Gastrocnemius medialis (tissue), 4 donors: ENCODE measurements at regions of chr17 and their contacts with region 1.

Region 1: DNA sequence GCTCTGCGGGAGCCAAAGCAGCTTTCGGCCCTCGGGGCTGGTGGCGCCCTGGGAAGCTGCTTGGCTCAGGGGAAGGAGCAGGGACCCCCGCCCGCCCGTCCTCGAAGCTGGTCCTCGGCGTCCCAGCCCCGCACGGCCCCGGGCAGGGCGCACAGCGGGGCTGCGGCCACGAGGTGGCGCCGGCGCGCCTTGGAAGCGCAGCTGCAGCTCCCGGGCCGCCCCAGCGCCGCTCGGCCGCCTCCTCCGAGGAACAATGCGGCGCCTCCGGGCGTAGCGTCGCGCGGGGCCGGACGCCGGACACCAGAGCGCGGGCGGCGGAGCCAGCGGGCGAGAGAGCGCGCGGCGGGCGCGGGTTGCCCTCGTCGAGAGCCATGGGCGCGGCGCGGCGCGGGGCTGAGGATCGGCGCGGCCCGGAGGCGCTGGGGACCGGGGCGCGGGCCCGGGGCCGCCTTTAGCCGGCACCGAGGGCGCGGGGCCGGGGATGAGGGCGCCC is at the start of gene MGAT5B:
- DNase-seq: peak; percentile 24 to 41
- ATAC-seq: peak; percentile 91
- H3K4me3 ChIP-seq: peak within 1 kb of the TSS in 1 of 4 donors; percentile 18
- H3K27ac ChIP-seq: no peak within 1 kb of the TSS
- H3K4me1 ChIP-seq: peaks cover 0 to 3% of the 10 kb centered on the region in 2 donors
- H3K27me3 ChIP-seq: peaks cover 27 to 34% (median 29%) of the 10 kb centered on the region in 3 donors
- CTCF ChIP-seq: peak; percentile 61 to 96 (median 88)
- POLR2A ChIP-seq: no peak
- total RNA-seq, gene MGAT5B: not detected

Region 2: GRCh38 chr17:76843703-76844484 is 24.3 kb before region 1 on chr17:
- in situ Hi-C with region 1: no loop called
- intact Hi-C with region 1: no loop called
- DNase-seq: no peak
- ATAC-seq: no peak
- H3K4me3 ChIP-seq: no peak overlapping the region
- H3K27ac ChIP-seq: no peak overlapping the region
- H3K4me1 ChIP-seq: no peaks in the 10 kb centered on the region
- H3K27me3 ChIP-seq: peaks cover 28 to 61% (median 48%) of the 10 kb centered on the region in 3 donors
- CTCF ChIP-seq: no peak
- POLR2A ChIP-seq: no peak

Region 3: DNA sequence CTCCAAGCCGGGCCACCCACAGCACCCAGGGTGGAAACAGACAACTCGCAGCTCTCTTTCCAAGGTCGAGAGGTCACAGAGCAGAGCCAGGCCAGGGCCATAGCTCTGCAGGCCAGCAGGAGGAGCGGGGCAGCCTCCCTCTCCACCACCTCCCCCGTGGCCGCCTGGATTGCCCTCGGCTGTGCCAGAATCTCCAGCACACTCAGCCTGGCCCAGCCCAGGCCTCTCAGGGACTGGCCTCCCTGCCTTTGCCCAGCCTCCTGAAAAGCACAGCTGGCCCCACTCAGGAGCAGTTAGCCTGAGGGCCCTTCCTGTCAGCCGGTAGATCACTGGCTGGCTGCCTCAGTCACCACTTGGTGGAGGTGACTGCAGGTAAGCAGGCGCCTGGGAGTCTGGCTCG is 186.7 kb after region 1 on chr17:
- in situ Hi-C with region 1: loop called (anchors 5 to 10 kb)
- intact Hi-C with region 1: loop called (anchors 1 kb)
- DNase-seq: no peak
- ATAC-seq: no peak
- H3K4me3 ChIP-seq: no peak overlapping the region
- H3K27ac ChIP-seq: no peak overlapping the region
- H3K4me1 ChIP-seq: no peaks in the 10 kb centered on the region
- H3K27me3 ChIP-seq: peaks cover 22 to 34% (median 26%) of the 10 kb centered on the region in 3 donors
- CTCF ChIP-seq: no peak
- POLR2A ChIP-seq: no peak

Region 4: DNA sequence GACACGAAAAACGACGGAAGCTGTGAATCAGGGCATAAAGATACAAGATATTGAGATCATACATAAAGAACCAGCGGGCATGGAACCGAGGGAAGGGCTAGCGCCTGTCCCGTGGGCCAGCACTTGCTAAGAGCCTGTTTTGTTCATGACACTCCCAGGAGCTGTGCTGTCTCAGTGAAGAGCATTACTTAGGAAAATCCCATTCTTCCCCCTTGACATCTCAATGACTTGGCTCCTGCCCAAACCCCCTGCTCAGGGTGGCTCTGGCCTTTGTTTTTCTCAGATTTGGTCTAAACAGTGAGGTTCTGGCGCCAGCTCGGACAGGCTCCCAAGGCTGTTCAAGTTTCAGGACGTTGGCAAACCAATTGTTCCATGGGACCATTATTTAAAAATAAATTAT is 193.4 kb after region 1 on chr17:
- in situ Hi-C with region 1: loop called in 3 of 4 experiments (anchors 5 to 10 kb)
- intact Hi-C with region 1: loop called (anchors 1 kb)
- DNase-seq: no peak
- ATAC-seq: no peak
- H3K4me3 ChIP-seq: no peak overlapping the region
- H3K27ac ChIP-seq: no peak overlapping the region
- H3K4me1 ChIP-seq: no peaks in the 10 kb centered on the region
- H3K27me3 ChIP-seq: peaks cover 4 to 11% (median 4%) of the 10 kb centered on the region in 3 donors
- CTCF ChIP-seq: no peak
- POLR2A ChIP-seq: no peak

Region 5: DNA sequence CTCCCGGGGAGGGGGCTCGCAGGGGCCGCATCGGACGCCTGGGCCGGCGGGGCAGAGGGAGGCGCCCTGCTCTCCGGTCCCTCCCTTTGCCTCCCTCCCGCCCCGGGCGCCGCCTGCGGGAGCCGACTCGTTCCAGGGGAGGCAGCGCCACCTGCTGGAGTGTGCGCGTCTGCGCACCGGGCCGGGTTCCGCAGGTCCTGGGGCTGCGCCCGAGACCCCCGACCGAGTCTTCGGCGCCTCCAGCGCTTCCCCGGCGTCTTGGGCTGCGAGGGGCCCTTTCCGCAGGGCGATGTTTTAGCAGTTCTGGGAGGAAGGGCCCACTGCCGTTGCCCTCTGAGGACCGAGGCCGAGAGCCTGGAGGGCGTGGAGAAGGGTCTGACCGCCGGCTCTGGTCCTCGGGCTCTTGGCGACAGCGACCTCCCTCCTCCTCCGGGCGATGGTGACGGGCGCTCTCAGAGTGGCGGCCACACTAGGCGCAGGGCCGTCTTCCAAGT is 378.9 kb after region 1 on chr17:
- in situ Hi-C with region 1: loop called (anchors 25 kb)
- intact Hi-C with region 1: loop called (anchors 5 kb)
- DNase-seq: peak; percentile 60 to 63
- ATAC-seq: peak; percentile 79 to 90
- H3K4me3 ChIP-seq: peak overlapping the region; percentile 58 to 70 (median 60)
- H3K27ac ChIP-seq: peak overlapping the region in 2 of 4 donors; percentile 37 to 45
- H3K4me1 ChIP-seq: peaks cover 6 to 11% of the 10 kb centered on the region in 2 donors
- H3K27me3 ChIP-seq: no peaks in the 10 kb centered on the region
- CTCF ChIP-seq: peak; percentile 99
- POLR2A ChIP-seq: no peak

Region 6: GRCh38 chr17:77254951-77255825 is 387.0 kb after region 1 on chr17:
- in situ Hi-C with region 1: loop called in 2 of 4 experiments (anchors 25 kb)
- intact Hi-C with region 1: no loop called
- DNase-seq: no peak
- ATAC-seq: no peak
- H3K4me3 ChIP-seq: no peak overlapping the region
- H3K27ac ChIP-seq: no peak overlapping the region
- H3K4me1 ChIP-seq: no peaks in the 10 kb centered on the region
- H3K27me3 ChIP-seq: no peaks in the 10 kb centered on the region
- CTCF ChIP-seq: no peak
- POLR2A ChIP-seq: no peak